Activated T-helper 1 cell treated with anti-CD3 and anti-CD28 coated beads, Interleukin-12 subunit alpha, Interleukin-12 subunit beta, Interleukin-2, Interleukin-4 antibody, amounts not matched to agents 30 ng/mL and 10 ng/mL and 1 ng/mL, durations not matched to agents 14 hours and 24 hours and 36 hours (primary cell): ENCODE measurements at regions of chr13 and their contacts with region 1.

Region 1: GRCh38 chr13:100235311-100235901 is 146.5 kb downstream of the PCCA start:
- DNase-seq: no peak
- H3K4me3 Mint-ChIP-seq: no peak overlapping the region
- H3K27ac Mint-ChIP-seq: no peak overlapping the region
- H3K4me1 Mint-ChIP-seq: peaks cover 15% of the 10 kb centered on the region
- H3K27me3 Mint-ChIP-seq: no peaks in the 10 kb centered on the region

Region 2: GRCh38 chr13:99916366-99917103 is 318.9 kb before region 1 on chr13:
- intact Hi-C with region 1: loop called (anchors 1 kb)
- DNase-seq: peak; percentile 12
- H3K4me3 Mint-ChIP-seq: no peak overlapping the region
- H3K27ac Mint-ChIP-seq: no peak overlapping the region
- H3K4me1 Mint-ChIP-seq: peaks cover 38% of the 10 kb centered on the region
- H3K27me3 Mint-ChIP-seq: peaks cover 8% of the 10 kb centered on the region

Region 3: DNA sequence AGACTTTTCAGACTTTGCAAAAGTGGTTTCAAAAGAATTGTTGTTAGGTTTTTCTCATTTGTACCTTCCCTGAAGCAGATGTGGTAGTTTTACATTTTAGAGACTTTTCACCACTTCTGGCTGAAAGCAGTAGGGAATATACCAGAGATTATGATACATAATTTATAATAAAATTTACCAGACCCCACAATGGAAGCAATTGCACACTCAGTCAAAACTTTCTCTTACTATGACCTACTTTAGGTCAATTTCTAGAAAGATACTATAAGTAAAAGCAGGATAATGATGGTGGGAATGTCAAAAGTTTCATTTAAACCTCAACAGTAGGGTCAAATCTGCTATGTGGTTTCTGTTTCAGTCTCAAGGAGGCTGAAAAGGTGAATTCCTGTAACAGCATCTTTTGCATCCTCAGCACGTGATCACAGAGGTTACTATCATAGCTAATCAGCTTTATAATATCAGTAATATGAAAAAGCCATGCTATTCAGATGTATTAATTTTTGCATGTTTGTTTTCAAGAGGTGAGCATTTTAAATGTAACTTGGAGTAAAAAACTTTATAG is 119.6 kb before region 1 on chr13:
- intact Hi-C with region 1: no loop called
- DNase-seq: no peak
- H3K4me3 Mint-ChIP-seq: no peak overlapping the region
- H3K27ac Mint-ChIP-seq: no peak overlapping the region
- H3K4me1 Mint-ChIP-seq: peaks cover 17% of the 10 kb centered on the region
- H3K27me3 Mint-ChIP-seq: no peaks in the 10 kb centered on the region